HepG2 (cell line): ENCODE measurements at regions of chr15 and their contacts with region 1.

Region 1: GRCh38 chr15:38576837-38577236 is 12.2 kb upstream of the RASGRP1 start:
- DNase-seq: no peak
- ATAC-seq: no peak
- H3K4me3 ChIP-seq: no peak overlapping the region
- H3K27ac ChIP-seq: no peak overlapping the region
- H3K4me1 ChIP-seq: no peaks in the 10 kb centered on the region
- H3K27me3 ChIP-seq: no peaks in the 10 kb centered on the region
- CTCF ChIP-seq: no peak
- EP300 ChIP-seq: no peak
- POLR2A ChIP-seq: no peak
- RAD21 ChIP-seq: no peak

Region 2: GRCh38 chr15:38593524-38593923 is 16.7 kb after region 1 on chr15:
- CTCF ChIA-PET with region 1: no interaction called
- POLR2A ChIA-PET with region 1: no interaction called
- in situ Hi-C with region 1: no loop called
- intact Hi-C with region 1: loop called (anchors 1 kb)
- DNase-seq: no peak
- ATAC-seq: no peak
- H3K4me3 ChIP-seq: no peak overlapping the region
- H3K27ac ChIP-seq: no peak overlapping the region
- H3K4me1 ChIP-seq: no peaks in the 10 kb centered on the region
- H3K27me3 ChIP-seq: peaks cover 0 to 6% of the 10 kb centered on the region in 2 experiments; a peak in 2 of 5 replicates
- CTCF ChIP-seq: no peak
- EP300 ChIP-seq: no peak
- POLR2A ChIP-seq: no peak
- RAD21 ChIP-seq: no peak